ENCODE measurements at regions of chr3 and their contacts with region 1.

Region 1: GRCh38 chr3:197309528-197310361 is 11.3 kb upstream of the DLG1 start:
- DNase-seq: no peak
- H3K4me3 ChIP-seq: no peak overlapping the region
- H3K27ac ChIP-seq: peak overlapping the region; percentile 93
- H3K27me3 ChIP-seq: no peaks in the 10 kb centered on the region
- CTCF ChIP-seq: no peak

Region 2: GRCh38 chr3:197286678-197287077 is 23.1 kb before region 1 on chr3:
- CTCF ChIA-PET with region 1: no interaction called
- POLR2A ChIA-PET with region 1: no interaction called
- DNase-seq: no peak
- H3K4me3 ChIP-seq: no peak overlapping the region
- H3K27ac ChIP-seq: no peak overlapping the region
- H3K27me3 ChIP-seq: no peaks in the 10 kb centered on the region
- CTCF ChIP-seq: no peak

Region 3: GRCh38 chr3:197298341-197298857 is 11.3 kb before region 1 on chr3 and contains the start of gene DLG1:
- CTCF ChIA-PET with region 1: no interaction called
- POLR2A ChIA-PET with region 1: interaction called, 14 read pairs
- DNase-seq: peak; percentile 79
- H3K4me3 ChIP-seq: peak within 1 kb of the TSS; percentile 96
- H3K27ac ChIP-seq: peak within 1 kb of the TSS; percentile 86
- H3K27me3 ChIP-seq: no peaks in the 10 kb centered on the region
- CTCF ChIP-seq: no peak
- polyA plus RNA-seq, gene DLG1: 50.0 and 58.9 TPM in 2 replicates

Measured in AG04450 (cell line).